Right ventricle myocardium inferior (tissue), 1 donor: ENCODE measurements at regions of chr11 and their contacts with region 1.

Region 1: DNA sequence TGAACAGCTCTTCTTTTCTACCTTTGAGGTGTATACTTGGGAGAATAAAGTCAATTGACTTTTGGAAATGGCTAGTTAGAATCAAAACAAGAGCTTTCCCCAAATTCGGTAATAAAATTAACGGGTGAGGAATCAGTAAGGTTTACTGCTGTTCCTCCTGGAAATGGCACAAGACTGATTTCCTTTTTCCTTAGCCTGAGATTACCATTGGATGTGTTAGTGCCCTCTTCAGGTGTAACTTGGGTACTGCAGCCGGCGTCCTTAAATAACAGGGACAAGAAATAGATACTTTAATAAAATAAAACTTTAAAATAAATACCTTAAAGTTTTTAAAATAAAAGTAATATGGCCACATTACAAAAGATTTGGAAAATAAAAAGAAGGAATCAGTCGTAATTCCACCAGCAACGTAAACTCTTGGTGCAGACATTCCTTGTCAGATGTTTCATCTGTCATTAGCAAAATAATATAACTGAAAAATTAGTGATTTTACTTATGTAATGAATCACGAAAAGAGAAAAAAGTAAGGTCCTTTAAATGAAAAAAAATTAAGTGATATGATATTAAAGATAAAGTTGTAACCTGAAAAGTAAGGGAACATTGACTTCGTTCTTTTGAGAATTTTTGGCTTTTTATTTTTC is 29.7 kb downstream of the ZFTA start:
- DNase-seq: no peak
- ATAC-seq: no peak

Region 2: DNA sequence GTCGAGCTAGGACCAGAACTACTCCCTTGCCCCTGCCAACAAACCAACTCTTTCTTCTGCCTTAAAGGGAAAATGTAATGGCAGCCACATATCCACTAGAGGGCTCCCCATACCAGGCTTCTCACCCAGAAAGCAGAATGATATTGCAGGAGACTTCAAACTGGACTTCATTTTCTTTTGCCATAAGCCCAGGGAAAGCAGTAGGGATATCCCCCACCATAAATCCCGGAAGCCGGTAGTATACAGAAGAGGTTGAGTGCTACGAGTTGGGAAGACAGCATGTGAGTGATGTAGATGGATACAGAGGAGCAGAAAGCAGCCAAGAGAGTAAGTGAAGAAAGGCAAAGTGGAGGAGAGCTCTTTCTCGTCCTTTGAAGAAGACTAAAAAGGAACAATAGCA is 259.9 kb before region 1 on chr11:
- intact Hi-C with region 1: loop called (anchors 2 kb)
- DNase-seq: no peak
- ATAC-seq: peak; percentile 79

Region 3: DNA sequence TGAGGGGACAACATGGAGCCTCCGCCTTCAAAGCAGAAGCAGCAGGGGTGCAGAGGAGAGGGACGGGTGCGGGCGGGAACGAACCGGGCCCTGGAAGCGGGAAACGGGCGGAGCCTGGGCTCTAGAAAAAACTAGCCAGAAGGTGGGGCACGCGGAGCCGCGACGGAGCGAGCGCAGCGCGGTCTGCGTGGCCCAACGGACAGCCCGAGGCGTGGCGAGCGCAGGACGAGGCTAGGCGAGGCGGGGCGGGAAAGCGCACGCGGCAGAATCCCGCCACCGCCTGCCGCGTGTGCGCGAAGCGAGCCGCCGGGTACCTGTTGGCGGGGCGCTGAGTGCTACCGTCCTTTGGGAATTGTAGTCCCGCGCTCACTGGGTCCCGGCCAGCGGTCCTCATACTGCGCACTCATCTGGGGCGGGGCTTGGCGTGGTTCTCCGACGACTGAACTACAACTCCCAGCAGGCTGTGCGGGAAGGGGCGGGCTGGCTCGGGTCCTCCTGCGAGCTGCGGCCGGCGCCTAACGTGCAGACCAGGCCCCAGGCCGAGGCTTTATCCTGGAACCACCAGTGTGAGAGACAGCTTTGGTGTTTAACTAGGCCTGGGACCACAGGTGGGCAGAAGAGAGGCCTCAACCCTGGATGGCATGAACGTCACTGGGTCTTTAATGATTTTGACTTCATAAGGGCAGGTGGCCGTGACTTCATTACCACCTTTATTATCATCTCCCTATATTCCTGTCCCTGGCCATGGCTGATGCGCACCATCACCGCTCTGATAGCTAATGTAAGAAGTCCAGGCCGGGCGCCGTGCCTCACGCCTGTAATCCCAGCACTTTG is 67.3 kb before region 1 on chr11 and contains the start of gene ATL3:
- intact Hi-C with region 1: loop called (anchors 5 kb)
- DNase-seq: peak; percentile 99
- ATAC-seq: peak; percentile 95
- total RNA-seq, gene ATL3: 15.4 TPM